BJ (cell line): ENCODE measurements at regions of chr10 and their contacts with region 1.

Region 1: DNA sequence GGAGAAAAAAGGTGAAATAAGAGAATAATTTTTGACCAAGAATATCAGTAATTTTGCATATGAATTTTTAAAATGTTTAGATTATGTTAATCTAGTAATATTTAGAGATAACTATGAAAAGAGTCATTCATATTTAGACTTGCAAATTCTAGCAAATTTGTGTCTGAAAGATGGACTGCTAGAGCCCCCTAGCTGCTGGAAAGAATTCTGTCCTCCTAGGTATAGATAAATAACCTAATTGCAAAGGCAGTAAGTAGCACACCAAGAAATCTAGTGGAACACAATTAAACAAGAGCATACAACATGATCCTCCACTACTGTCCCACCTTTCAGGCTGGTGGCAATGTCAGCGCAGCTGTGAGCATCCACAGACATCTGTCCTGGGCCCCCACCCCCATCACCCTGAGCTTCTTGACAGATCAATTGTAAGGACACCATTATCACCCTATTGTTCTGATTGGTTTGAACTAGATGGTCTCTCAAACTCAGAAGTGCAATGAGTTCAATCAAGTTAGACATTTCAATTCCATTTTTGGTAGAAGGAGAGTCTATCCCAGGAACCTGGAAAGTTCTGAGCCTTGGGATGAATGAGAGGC is 15.0 kb upstream of the GFRA1 start:
- DNase-seq: no peak
- H3K4me3 ChIP-seq: no peak overlapping the region
- H3K27me3 ChIP-seq: no peaks in the 10 kb centered on the region
- CTCF ChIP-seq: peak; percentile 72

Region 2: DNA sequence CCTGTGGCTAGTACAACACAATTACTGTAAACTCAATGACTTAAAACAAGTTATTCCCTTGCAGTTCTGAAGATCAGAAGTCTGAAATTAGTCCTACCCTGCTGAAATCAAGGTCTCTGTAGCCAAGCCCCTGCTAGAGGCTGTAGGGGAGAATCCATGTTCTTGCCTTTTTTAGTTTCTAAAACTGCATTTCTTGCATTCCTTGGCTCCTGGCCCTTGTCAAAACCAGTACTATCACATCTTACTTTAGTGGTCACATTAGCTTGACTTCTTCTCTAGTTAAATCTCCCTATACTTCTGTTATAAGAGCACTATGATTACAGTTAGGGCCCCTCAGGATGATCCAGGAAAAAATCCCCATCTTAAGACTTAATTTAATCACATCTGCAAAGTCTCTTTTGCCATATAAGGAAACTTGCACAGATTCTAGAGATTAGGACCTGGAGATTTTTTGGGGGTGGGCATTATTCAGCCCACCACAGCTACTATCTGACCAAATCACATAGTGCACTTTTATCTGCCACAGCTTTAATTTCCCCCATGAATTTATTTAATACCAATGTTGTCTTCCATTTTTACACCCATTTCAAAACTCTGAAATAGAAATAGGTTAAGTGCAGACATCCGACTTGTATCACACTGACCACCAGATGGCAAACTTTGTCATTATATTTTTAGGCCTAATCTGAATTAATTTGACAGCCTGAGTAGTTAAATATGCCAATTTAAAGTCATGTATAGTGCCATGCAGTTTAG is 581.8 kb before region 1 on chr10:
- CTCF ChIA-PET with region 1: interaction called, 78 read pairs
- POLR2A ChIA-PET with region 1: no interaction called
- DNase-seq: no peak
- H3K4me3 ChIP-seq: no peak overlapping the region
- H3K27me3 ChIP-seq: no peaks in the 10 kb centered on the region
- CTCF ChIP-seq: peak; percentile 59

Region 3: DNA sequence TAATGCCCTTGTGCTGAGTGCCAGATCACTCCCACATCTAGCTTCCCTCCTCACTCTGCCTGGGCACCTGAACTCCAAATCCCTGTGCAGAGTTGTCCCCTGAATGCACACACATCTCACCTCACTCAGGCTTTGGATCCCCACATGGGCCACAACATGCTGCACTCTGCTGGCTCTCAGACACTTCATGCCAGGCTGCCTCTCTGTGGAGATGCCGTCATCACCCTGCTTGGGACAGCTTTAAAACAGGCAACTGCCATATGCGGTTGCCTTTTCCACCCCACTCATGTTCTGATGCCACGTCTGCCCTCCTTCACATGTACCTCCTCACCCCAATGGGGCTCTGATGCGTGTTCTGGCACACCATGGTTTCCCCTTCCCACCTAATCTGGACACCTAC is 492.0 kb before region 1 on chr10:
- CTCF ChIA-PET with region 1: interaction called, 69 read pairs
- POLR2A ChIA-PET with region 1: no interaction called
- DNase-seq: no peak
- H3K4me3 ChIP-seq: no peak overlapping the region
- H3K27me3 ChIP-seq: no peaks in the 10 kb centered on the region
- CTCF ChIP-seq: no peak

Region 4: GRCh38 chr10:115801992-115802391 is 486.0 kb before region 1 on chr10:
- CTCF ChIA-PET with region 1: interaction called, 69 read pairs
- POLR2A ChIA-PET with region 1: no interaction called
- DNase-seq: no peak
- H3K4me3 ChIP-seq: no peak overlapping the region
- H3K27me3 ChIP-seq: no peaks in the 10 kb centered on the region
- CTCF ChIP-seq: no peak

Region 5: GRCh38 chr10:115829521-115830205 is 458.3 kb before region 1 on chr10:
- CTCF ChIA-PET with region 1: interaction called, 26 read pairs
- POLR2A ChIA-PET with region 1: no interaction called
- DNase-seq: no peak
- H3K4me3 ChIP-seq: no peak overlapping the region
- H3K27me3 ChIP-seq: no peaks in the 10 kb centered on the region
- CTCF ChIP-seq: peak; percentile 49

Region 6: GRCh38 chr10:115948465-115948864 is 339.5 kb before region 1 on chr10:
- CTCF ChIA-PET with region 1: interaction called, 15 read pairs
- POLR2A ChIA-PET with region 1: no interaction called
- DNase-seq: no peak
- H3K4me3 ChIP-seq: no peak overlapping the region
- H3K27me3 ChIP-seq: no peaks in the 10 kb centered on the region
- CTCF ChIP-seq: peak; percentile 60

Region 7: DNA sequence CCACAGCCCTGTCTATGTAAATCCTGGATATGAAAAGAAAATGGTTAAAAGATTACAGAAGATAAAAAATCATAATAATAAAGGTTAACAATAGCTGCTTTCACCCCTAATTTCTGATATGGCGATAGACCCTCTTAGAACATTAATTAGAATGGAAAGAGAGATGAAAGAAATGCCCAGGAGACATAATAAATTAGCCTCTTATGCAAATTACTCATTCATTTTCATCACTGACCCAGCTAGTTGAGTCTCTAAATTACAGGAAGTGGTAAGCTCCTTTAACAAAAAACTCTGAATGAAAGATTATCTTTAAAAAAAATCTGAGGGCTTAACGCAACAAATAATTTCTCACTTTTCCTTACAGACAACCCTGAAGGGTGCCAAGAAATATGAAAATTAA is 27.4 kb before region 1 on chr10:
- CTCF ChIA-PET with region 1: no interaction called
- POLR2A ChIA-PET with region 1: no interaction called
- DNase-seq: no peak
- H3K4me3 ChIP-seq: no peak overlapping the region
- H3K27me3 ChIP-seq: no peaks in the 10 kb centered on the region
- CTCF ChIP-seq: no peak

Region 8: DNA sequence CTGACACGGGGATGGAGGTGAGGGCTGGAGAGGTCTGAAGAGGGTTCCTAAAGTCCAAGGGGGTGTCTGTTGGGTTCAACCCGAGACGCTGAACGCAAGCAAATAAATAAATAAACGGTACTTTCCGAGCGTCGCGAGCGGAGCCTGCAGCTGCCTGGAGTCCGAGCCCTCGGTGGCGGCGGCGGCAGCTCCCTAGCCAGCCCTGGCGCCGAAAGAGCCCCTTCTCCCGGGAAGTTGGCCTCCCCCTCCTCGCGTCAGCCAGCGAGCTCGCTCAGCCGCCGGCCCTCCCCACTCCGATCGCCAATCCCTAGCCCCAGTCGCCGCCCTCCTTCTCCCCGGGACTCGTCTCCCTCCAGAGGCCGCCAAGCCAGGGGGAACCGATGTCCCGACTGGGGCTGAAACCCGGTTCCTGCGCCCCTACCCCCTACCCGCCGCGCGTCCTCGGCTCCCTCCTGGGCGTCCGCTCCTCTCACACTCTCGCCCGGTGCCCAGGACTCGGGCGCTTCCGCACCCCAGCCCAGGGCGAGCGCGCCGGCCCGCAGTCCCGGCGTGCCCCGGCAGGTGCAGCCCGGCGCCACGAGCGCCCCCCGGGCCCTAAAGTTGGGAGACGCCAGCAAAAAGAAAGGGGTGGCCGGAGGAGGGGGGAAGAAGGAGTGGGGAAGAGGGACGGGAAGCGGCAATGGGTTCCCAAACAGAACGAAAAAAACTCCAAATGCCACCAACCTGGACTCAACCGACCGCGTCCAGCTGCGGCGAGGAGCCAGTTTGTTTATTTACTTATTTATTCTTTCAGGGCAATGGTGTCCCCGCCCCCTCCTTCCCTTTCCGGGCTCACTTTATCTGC is 15.3 kb before region 1 on chr10 and contains the start of gene GFRA1:
- CTCF ChIA-PET with region 1: interaction called, 12 read pairs
- POLR2A ChIA-PET with region 1: no interaction called
- DNase-seq: no peak
- H3K4me3 ChIP-seq: peak within 1 kb of the TSS; percentile 60
- H3K27me3 ChIP-seq: peaks cover 8% of the 10 kb centered on the region
- CTCF ChIP-seq: 0 out of 2 replicates have a peak, but pooled peaks have one; percentile 4
- polyA plus RNA-seq, gene GFRA1: 25.9 and 41.6 TPM in 2 replicates